ENCODE measurements at regions of chr3 and their contacts with region 1.

Region 1: GRCh38 chr3:123044981-123045763 is 17.6 kb upstream of the SEMA5B start:
- DNase-seq: no peak
- H3K4me3 Mint-ChIP-seq: no peak overlapping the region
- H3K27ac Mint-ChIP-seq: no peak overlapping the region
- H3K4me1 Mint-ChIP-seq: no peaks in the 10 kb centered on the region
- H3K27me3 Mint-ChIP-seq: peaks cover 2% of the 10 kb centered on the region

Region 2: GRCh38 chr3:123380261-123380660 is 335.1 kb after region 1 on chr3:
- CTCF ChIA-PET with region 1: interaction called, 10 read pairs
- intact Hi-C with region 1: no loop called
- DNase-seq: no peak
- H3K4me3 Mint-ChIP-seq: no peak overlapping the region
- H3K27ac Mint-ChIP-seq: no peak overlapping the region
- H3K4me1 Mint-ChIP-seq: no peaks in the 10 kb centered on the region
- H3K27me3 Mint-ChIP-seq: no peaks in the 10 kb centered on the region